HEK293T (cell line): ENCODE measurements at regions of chr19 and their contacts with region 1.

Region 1: GRCh38 chr19:46487802-46488445 is 7.7 kb downstream of the PNMA8B start:
- DNase-seq: peak; percentile 84

Region 2: DNA sequence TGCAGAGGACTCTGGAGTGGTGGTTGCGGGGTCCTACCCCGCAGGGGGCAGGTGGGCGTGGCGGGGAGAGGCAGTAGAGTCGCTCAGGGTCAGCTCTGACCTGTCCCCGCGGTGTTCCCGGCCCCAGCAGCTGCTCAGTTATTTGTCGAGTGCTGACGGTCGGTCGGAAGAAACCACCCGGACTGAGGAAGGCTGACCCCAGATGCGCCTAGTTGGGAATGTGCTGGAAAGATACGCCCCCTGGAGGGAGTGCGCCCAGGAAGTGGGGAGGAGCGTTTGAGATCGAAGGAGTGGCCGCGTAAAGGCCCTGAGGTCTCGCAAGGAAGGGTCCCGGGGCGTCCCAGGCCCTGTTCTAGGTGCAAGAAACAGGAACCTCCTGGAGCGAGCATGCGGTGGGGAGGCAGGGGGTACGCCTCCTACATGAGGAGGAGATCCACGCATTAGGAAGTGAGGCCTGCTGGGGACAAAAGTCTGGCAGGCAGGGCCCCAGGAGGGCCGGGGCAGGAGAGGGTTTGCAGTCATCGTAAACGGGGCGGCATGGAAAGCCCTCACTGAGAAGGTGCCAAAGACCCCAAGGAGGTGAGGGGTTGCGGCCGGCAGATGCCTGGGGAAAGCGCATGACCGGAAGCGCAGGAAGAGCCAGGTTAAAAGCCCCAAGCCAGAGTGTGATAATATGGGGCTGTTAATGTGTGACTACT is 83.7 kb before region 1 on chr19:
- CTCF ChIA-PET with region 1: interaction called, 10 read pairs
- POLR2A ChIA-PET with region 1: no interaction called
- DNase-seq: no peak